GM10248 (cell line): ENCODE measurements at regions of chr13 and their contacts with region 1.

Region 1: DNA sequence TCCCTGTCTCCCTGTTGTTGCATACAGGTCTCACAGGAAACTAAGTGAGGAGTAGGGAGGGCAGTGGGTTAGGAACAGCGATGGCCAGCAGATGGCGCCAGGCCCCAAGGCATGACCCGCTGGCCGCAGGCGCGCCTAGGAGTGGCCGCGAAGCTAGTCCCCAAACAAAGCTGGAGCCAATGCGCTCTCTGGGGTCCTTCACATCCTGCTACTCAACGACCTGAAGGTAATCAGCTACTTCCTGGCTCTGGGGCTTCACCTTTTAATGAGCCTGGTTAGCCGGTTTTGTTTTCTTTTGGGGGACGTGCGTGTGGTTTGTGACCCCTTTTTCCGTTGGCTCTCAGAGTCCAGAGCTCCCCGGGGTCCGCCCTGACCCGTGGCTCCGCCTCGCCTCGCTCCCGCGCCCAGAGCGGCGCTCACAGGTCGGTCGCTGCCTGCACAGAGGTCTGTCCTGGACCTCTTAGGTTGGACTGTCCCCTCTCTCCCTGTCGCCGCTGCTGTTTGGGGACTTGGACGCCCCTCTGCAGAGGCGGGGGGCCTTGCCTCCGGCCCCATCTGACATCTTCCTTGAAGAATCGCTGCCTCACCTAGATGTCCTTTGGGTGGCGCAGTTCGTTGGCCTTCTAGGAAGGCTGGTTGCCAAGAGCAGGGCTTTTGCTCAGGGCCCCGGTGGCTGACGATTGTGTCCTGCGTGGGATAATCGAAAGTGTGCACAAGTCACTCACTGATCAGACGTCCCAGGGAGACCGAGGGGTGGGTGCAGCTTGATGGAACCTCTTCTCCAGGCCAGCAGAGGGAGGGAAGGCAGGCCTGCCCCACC is 62.1 kb upstream of the GTF3A start:
- DNase-seq: peak; percentile 88
- CTCF ChIP-seq: peak; percentile 88

Region 2: DNA sequence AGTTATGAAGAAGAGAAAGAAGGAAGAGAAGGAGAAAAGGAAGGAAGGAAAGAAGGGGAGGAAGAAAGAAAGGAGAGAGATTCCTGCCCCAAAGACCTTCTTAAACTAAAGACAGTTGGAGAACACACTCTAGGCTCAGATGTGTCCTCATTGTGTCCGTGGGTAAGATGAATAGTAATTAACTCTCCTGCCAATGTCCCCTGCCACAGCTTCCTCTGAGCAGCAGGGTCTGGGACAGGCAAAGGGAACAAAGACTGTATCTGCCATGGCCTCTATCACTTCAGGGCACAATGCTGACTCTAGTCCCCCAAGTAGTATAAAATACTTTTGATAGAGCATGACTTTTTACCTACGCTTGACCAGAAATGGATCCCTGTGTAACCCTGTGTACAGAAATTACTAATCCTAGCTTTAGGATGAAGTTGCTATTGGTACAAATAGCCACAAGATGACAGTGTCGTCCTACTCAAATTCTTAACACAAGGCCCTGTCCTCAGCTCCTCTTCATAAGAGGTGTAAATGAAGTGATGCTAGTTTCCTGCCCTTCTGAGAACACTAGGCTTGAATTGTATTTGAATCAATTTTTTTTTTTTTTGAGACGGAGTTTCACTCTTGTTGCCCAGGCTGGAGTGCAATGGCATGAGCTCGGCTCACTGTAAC is 415.5 kb before region 1 on chr13:
- CTCF ChIA-PET with region 1: interaction called, 29 read pairs
- POLR2A ChIA-PET with region 1: interaction called, 4 read pairs
- DNase-seq: peak; percentile 50
- CTCF ChIP-seq: peak; percentile 53

Region 3: GRCh38 chr13:26996965-26997752 is 365.1 kb before region 1 on chr13:
- CTCF ChIA-PET with region 1: interaction called, 13 read pairs
- POLR2A ChIA-PET with region 1: no interaction called
- DNase-seq: peak; percentile 39
- CTCF ChIP-seq: no peak

Region 4: GRCh38 chr13:27374650-27375049 is 12.4 kb after region 1 on chr13:
- CTCF ChIA-PET with region 1: interaction called, 84 read pairs
- POLR2A ChIA-PET with region 1: no interaction called
- DNase-seq: peak; percentile 75
- CTCF ChIP-seq: peak; percentile 71

Region 5: DNA sequence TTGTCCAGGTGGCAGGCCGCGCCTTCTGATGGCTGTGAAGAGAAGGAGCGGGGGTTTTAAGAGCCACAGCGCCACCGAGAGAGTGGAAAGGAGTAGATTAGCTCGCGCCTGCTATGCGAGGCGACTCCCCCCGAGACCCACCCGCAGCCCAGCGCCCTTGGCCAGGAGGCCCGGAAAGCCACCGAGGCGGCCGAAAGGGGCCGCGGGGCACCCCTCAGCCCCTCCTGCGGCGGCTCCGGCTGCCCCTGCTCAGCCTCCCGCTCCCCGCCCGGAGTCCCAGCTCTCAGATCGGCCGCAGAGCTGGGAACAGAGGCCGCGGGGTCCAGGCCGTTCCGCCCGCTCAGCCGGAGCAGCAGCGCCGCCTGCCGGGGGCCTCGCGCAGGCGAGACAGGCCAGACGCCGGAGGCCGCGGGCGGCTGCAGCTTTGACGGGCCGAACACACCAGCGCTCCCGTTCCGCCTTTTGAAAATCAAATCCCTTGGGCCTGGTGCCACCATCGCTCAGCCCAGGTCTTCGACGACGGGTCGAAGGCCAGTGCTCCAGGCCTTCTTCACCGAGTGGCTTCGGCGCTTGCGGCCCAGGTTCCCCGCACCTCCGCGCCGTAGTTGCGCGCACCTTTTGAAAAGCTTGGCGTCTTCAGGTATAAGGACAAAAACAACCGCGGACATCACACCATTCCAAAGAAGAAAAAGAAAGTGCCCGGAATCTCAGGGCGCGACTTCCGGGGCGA is 591.6 kb after region 1 on chr13:
- CTCF ChIA-PET with region 1: interaction called, 28 read pairs
- POLR2A ChIA-PET with region 1: no interaction called
- DNase-seq: peak; percentile 89
- CTCF ChIP-seq: peak; percentile 97

Region 6: DNA sequence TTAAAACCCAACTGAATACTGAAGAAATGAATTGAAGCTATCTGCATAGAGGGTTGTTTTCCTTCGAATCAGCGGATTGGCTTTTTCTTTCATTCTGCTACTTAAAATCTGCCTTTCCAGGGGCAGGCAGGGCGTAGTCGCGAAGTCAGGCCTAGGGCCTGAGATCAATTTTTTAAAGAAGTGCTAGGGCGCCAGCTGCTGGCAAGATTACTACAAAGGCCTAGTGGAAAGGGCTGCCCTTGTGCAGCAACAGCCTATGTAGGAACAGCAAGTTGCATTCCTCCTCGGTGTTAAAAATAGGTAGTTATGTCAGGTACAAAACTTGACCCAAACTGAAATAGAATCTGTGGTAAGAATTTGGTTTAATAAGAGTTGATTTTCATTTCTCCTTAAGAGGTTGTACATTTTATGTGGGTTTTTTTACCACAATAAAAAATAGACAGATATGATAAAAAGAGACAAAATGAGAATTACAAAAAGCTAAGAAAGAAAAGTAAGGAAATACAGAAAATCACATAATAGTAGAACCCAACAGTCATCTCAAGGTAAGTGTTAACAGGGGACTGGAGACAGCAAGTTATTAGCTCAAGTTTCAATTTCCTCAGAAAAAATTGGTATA is 635.7 kb after region 1 on chr13:
- CTCF ChIA-PET with region 1: interaction called, 13 read pairs
- POLR2A ChIA-PET with region 1: no interaction called
- DNase-seq: peak; percentile 51
- CTCF ChIP-seq: peak; percentile 61